ENCODE measurements at regions of chr16 and their contacts with region 1.

Region 1: GRCh38 chr16:589658-590159 is at the start of gene RAB40C:
- DNase-seq: peak; percentile 99
- ATAC-seq: peak; percentile 89
- H3K4me3 Mint-ChIP-seq: peak within 1 kb of the TSS; percentile 83
- H3K27ac Mint-ChIP-seq: peak within 1 kb of the TSS; percentile 97
- H3K4me1 Mint-ChIP-seq: peaks cover 22% of the 10 kb centered on the region
- H3K27me3 Mint-ChIP-seq: no peaks in the 10 kb centered on the region
- CTCF ChIP-seq: no peak
- total RNA-seq, gene RAB40C: 8.1 to 8.8 TPM

Region 2: DNA sequence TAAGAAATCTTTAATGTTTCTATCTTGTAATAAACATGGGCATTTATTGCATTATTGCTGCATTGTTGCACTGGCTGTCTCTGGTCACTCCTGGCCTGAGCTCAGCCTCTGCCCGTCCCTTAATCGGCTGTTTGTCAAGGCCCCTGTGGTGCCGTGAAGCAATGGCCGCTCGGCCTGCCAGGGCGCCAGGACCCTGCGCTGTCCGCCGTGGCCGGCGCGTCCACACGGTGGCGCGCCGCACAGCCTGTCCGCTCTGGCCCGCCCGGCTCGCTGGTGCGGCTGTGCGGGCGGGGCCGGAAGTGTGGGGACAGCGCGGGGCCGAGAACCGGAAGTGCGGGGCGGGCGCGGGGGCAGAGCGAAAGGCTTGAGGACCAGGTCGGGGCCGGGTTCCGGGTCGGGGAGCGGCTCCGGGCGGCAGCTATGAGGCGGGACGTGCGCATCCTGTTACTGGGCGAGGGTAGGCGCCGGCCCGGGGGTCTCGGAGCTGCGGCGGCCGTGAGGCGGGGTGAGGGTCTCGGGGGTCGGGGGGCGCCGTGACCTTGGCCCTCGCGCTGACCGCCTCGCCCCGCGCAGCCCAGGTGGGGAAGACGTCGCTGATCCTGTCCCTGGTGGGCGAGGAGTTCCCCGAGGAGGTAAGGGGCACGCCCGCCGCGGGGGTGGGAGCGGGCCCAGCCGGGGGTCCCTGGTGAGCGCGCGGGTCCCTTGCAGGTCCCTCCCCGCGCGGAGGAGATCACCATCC is 78.2 kb after region 1 on chr16 and contains the start of gene RHOT2:
- CTCF ChIA-PET with region 1: no interaction called
- POLR2A ChIA-PET with region 1: interaction called, 3 read pairs
- intact Hi-C with region 1: loop called (anchors 10 kb)
- DNase-seq: peak; percentile 95
- ATAC-seq: peak; percentile 98
- H3K4me3 Mint-ChIP-seq: peak within 1 kb of the TSS; percentile 75
- H3K27ac Mint-ChIP-seq: peak within 1 kb of the TSS; percentile 84
- H3K4me1 Mint-ChIP-seq: peaks cover 9% of the 10 kb centered on the region
- H3K27me3 Mint-ChIP-seq: no peaks in the 10 kb centered on the region
- CTCF ChIP-seq: peak; percentile 75
- total RNA-seq, gene RHOT2: 110 TPM

Region 3: DNA sequence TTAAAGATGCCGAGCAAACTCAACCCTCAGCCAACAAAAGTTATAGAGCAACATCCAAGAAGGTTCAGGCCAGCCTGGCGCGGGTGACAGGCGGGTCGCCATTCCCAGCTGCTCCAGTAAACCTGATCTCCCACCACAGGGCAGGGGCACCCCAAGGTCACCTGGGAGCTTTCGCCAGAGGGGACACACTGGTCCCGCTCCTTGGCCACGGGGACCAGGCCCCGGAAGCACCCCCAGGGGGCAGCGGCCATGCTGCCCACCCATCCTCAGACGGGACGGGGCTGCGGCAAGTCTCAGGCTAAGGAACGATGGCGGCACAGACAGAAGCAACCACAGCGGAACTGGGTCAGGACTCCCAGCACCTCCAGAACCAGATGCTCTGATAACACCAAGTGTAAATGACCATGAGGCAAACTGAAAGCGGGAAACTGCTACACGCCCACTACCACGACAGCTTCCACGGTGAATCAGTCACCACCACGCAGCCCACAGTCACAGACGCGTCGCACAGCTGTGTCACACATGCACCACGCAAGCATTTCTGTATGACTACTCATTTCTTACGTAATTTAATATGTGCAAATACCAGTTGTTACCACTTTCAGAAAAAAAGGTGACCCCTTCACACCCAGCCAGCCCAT is 868.7 kb after region 1 on chr16:
- CTCF ChIA-PET with region 1: no interaction called
- POLR2A ChIA-PET with region 1: no interaction called
- intact Hi-C with region 1: no loop called
- DNase-seq: peak; percentile 47
- ATAC-seq: peak; percentile 42
- H3K4me3 Mint-ChIP-seq: no peak overlapping the region
- H3K27ac Mint-ChIP-seq: no peak overlapping the region
- H3K4me1 Mint-ChIP-seq: peaks cover 6% of the 10 kb centered on the region
- H3K27me3 Mint-ChIP-seq: no peaks in the 10 kb centered on the region
- CTCF ChIP-seq: no peak

Measured in activated CD8-positive, alpha-beta T cell treated with anti-CD3 and anti-CD28 coated beads for 36 hours (primary cell).